ENCODE measurements at regions of chr7 and their contacts with region 1.

Region 1: DNA sequence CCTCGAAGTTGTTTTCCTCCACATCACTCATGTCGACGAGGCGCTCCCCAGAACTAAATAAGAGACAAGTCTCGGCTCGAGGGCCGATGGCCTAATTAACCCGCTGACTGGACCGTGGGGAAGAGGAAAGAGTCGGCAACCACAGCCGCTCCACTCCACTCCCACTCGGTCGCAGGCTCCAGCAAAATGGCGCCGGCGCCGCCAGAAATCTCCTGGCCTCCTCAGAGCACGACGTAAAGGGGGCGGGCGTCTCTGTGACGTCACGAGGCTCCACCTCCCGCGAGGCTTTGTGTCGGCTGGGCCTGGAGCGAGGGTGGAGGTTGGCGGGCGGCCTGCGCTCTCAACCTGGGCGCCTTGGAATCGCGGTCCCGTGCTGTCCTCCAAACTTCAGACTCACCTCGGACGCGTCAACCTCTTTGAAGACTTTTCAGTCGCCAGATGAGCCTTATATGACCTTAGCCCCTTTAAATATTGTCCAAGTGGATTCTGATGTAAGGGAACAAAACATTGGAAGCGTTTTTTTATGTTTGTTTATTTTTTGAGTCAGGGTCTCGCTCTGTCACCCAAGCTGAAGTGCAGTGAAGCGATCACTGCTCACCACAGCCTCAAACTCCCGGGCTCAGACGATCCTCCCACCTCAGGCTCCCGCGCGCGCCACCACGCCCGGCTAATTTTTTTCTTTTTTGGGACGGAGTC is at the start of gene TRA2A:
- DNase-seq: peak; percentile 90 to 98 (median 92)
- ATAC-seq: peak; percentile 86
- H3K4me3 ChIP-seq: peak within 1 kb of the TSS; percentile 78
- H3K27ac ChIP-seq: peak within 1 kb of the TSS; percentile 96
- H3K4me1 ChIP-seq: peaks cover 14 to 15% of the 10 kb centered on the region in 2 experiments; a peak in 4 of 5 replicates
- H3K27me3 ChIP-seq: no peaks in the 10 kb centered on the region
- CTCF ChIP-seq: no peak
- EP300 ChIP-seq: peak; percentile 4; the same call in 1 of the 2 replicates
- POLR2A ChIP-seq: peak; percentile 98
- RAD21 ChIP-seq: no peak
- polyA plus RNA-seq, gene TRA2A: 54.4 to 58.6 TPM

Region 2: GRCh38 chr7:23347682-23348180 is 184.2 kb before region 1 on chr7:
- CTCF ChIA-PET with region 1: no interaction called
- POLR2A ChIA-PET with region 1: interaction called, 7 read pairs
- in situ Hi-C with region 1: no loop called
- intact Hi-C with region 1: loop called (anchors 5 kb)
- DNase-seq: peak; percentile 48 to 76 (median 64)
- ATAC-seq: peak; percentile 91
- H3K4me3 ChIP-seq: no peak overlapping the region; the same call in 1 of the 2 replicates
- H3K27ac ChIP-seq: peak overlapping the region; percentile 87
- H3K4me1 ChIP-seq: peaks cover 8 to 25% of the 10 kb centered on the region in 2 experiments
- H3K27me3 ChIP-seq: no peaks in the 10 kb centered on the region
- CTCF ChIP-seq: no peak
- EP300 ChIP-seq: peak; percentile 52; the same call in 1 of the 2 replicates
- POLR2A ChIP-seq: no peak
- RAD21 ChIP-seq: no peak

Region 3: DNA sequence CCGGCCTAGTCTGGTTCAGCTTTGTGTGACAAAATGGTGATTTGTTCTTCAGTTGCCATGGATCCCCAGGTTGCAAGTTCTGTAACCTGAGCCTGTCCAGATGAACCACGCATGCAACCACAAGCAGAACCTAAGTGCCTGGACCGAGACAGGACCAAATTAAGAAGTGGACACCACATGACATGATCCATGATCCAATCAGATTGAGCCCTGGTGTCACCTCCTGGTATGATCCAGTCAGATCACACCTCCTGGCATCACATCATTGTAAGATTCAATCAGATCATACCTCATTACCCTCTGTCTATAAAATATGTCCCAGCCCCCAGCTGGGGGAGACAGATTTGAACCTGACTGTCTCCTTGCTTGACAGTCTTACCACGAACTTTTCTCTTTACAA is 162.8 kb before region 1 on chr7:
- CTCF ChIA-PET with region 1: no interaction called
- POLR2A ChIA-PET with region 1: no interaction called
- in situ Hi-C with region 1: no loop called
- intact Hi-C with region 1: no loop called
- DNase-seq: no peak
- ATAC-seq: no peak; the same call in 2 of the 3 replicates
- H3K4me3 ChIP-seq: no peak overlapping the region
- H3K27ac ChIP-seq: no peak overlapping the region
- H3K4me1 ChIP-seq: peaks cover 0 to 8% of the 10 kb centered on the region in 2 experiments; a peak in 2 of 5 replicates
- H3K27me3 ChIP-seq: no peaks in the 10 kb centered on the region
- CTCF ChIP-seq: no peak
- EP300 ChIP-seq: no peak
- POLR2A ChIP-seq: no peak
- RAD21 ChIP-seq: no peak

Region 4: DNA sequence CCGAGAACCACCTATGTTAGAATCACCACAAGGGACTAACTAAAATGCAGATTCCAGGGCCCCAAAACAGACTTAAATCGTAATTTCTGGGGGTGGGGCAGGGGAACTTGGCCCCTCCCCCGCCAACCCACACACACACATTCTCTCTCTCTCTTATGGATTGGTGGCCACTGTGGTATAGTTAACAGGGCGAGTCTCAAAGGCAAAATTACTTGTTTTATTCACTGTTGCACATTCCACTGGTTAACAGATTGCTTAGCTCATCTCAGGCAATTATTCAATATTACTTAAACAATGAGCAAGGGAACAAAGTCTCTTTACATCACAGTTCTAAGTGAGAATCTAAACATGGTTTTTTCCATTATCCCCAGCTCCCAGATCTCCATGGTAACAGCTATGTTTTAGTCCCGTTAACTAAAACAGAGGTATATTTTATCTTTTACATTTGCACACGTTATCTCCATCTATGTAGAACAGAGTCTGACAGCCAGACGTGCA is 100.2 kb before region 1 on chr7:
- CTCF ChIA-PET with region 1: no interaction called
- POLR2A ChIA-PET with region 1: interaction called, 4 read pairs
- in situ Hi-C with region 1: no loop called
- intact Hi-C with region 1: loop called (anchors 2 kb)
- DNase-seq: peak; percentile 41 to 56 (median 52)
- ATAC-seq: peak; percentile 62
- H3K4me3 ChIP-seq: no peak overlapping the region
- H3K27ac ChIP-seq: peak overlapping the region; percentile 41; the same call in 1 of the 3 replicates
- H3K4me1 ChIP-seq: peaks cover 11 to 48% of the 10 kb centered on the region in 2 experiments; a peak in 4 of 5 replicates
- H3K27me3 ChIP-seq: no peaks in the 10 kb centered on the region
- CTCF ChIP-seq: no peak
- EP300 ChIP-seq: peak; percentile 16; the same call in 1 of the 2 replicates
- POLR2A ChIP-seq: no peak
- RAD21 ChIP-seq: no peak

Region 5: GRCh38 chr7:23520582-23520981 is 11.4 kb before region 1 on chr7:
- CTCF ChIA-PET with region 1: no interaction called
- POLR2A ChIA-PET with region 1: interaction called, 12 read pairs
- in situ Hi-C with region 1: no loop called
- intact Hi-C with region 1: no loop called
- DNase-seq: peak in 1 of 4 experiments; percentile 27
- ATAC-seq: peak; percentile 42; the same call in 2 of the 3 replicates
- H3K4me3 ChIP-seq: no peak overlapping the region
- H3K27ac ChIP-seq: no peak overlapping the region
- H3K4me1 ChIP-seq: peaks cover 0 to 3% of the 10 kb centered on the region in 2 experiments; a peak in 1 of 5 replicates
- H3K27me3 ChIP-seq: no peaks in the 10 kb centered on the region
- CTCF ChIP-seq: peak; percentile 22 to 24 (median 23); a peak in 2 of 6 replicates
- EP300 ChIP-seq: no peak
- POLR2A ChIP-seq: no peak
- RAD21 ChIP-seq: 0 out of 4 replicates have a peak, but pooled peaks of 1 of the 2 experiments have one; percentile 11